H1 (cell line): ENCODE measurements at regions of chr6 and their contacts with region 1.

Region 1: DNA sequence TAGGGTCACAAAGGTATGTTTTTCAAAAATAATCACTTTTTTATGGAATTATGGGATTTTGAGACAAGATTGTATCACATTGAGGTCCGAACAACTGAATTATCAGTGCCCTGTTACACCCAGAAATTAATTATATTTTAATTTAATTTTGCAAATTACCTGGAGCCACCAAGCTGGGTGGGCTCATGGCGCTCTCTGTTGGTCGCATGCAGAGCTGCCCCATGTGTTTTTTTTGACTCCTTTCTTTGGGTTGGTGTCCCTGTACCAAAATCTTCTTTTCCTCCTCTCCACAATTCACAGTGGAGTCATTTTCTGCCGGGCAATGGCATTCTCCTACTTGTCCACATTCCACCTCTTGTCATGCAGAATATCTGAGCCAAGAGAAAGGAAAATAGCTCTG is 38.9 kb upstream of the FRMD1 start:
- DNase-seq: peak in 1 of 2 experiments; percentile 47
- H3K4me3 ChIP-seq: no peak overlapping the region
- H3K27ac ChIP-seq: no peak overlapping the region
- H3K4me1 ChIP-seq: peaks cover 0 to 3% (median 2%) of the 10 kb centered on the region in 4 experiments; a peak in 4 of 7 replicates
- H3K27me3 ChIP-seq: no peaks in the 10 kb centered on the region
- CTCF ChIP-seq: peak; percentile 59 to 75 (median 68)
- EP300 ChIP-seq: no peak
- POLR2A ChIP-seq: no peak
- RAD21 ChIP-seq: peak; percentile 84 to 89

Region 2: DNA sequence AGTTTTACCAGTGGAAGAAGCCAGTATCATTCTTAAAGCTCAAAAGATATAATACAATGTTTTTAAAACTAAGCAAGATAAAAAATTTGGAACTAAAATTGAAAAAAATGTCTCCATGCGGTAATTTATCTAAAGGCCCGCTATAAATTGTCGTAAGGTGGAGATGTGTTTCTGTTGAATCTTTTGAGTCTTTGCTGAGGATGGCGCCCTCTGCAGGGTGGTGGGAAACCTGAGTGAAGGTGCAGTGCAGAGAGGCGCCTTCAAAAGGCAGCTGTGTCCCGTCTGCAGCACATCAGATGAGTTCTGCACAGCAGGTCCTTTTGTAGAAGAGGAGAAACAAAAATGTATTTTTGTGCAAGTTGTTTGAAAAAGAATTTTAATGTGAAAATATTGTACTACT is 149.9 kb before region 1 on chr6:
- CTCF ChIA-PET with region 1: interaction called, 10 read pairs
- POLR2A ChIA-PET with region 1: no interaction called
- DNase-seq: peak; percentile 29 to 85
- H3K4me3 ChIP-seq: no peak overlapping the region
- H3K27ac ChIP-seq: no peak overlapping the region
- H3K4me1 ChIP-seq: peaks cover 0 to 4% (median under 1%) of the 10 kb centered on the region in 4 experiments; a peak in 4 of 7 replicates
- H3K27me3 ChIP-seq: no peaks in the 10 kb centered on the region
- CTCF ChIP-seq: peak; percentile 81 to 86 (median 86)
- EP300 ChIP-seq: no peak
- POLR2A ChIP-seq: no peak
- RAD21 ChIP-seq: peak; percentile 67 to 70

Region 3: GRCh38 chr6:168060521-168060931 is 57.4 kb before region 1 on chr6:
- CTCF ChIA-PET with region 1: interaction called, 71 read pairs
- POLR2A ChIA-PET with region 1: no interaction called
- DNase-seq: no peak
- H3K4me3 ChIP-seq: no peak overlapping the region
- H3K27ac ChIP-seq: no peak overlapping the region
- H3K4me1 ChIP-seq: no peaks in the 10 kb centered on the region
- H3K27me3 ChIP-seq: no peaks in the 10 kb centered on the region
- CTCF ChIP-seq: peak in 2 of 3 experiments; percentile 82 to 92; a peak in 3 of 4 replicates
- EP300 ChIP-seq: no peak
- POLR2A ChIP-seq: no peak
- RAD21 ChIP-seq: peak; percentile 90 to 93

Region 4: GRCh38 chr6:168071336-168072019 is 46.5 kb before region 1 on chr6:
- CTCF ChIA-PET with region 1: interaction called, 32 read pairs
- POLR2A ChIA-PET with region 1: no interaction called
- DNase-seq: peak in 1 of 2 experiments; percentile 74
- H3K4me3 ChIP-seq: no peak overlapping the region
- H3K27ac ChIP-seq: no peak overlapping the region
- H3K4me1 ChIP-seq: peaks cover 0 to 6% (median 1%) of the 10 kb centered on the region in 4 experiments; a peak in 2 of 7 replicates
- H3K27me3 ChIP-seq: no peaks in the 10 kb centered on the region
- CTCF ChIP-seq: peak; percentile 82 to 92 (median 89)
- EP300 ChIP-seq: no peak
- POLR2A ChIP-seq: no peak
- RAD21 ChIP-seq: peak; percentile 51 to 68

Region 5: GRCh38 chr6:168078175-168078942 is 39.6 kb before region 1 on chr6:
- CTCF ChIA-PET with region 1: interaction called, 31 read pairs
- POLR2A ChIA-PET with region 1: no interaction called
- DNase-seq: no peak
- H3K4me3 ChIP-seq: no peak overlapping the region
- H3K27ac ChIP-seq: no peak overlapping the region
- H3K4me1 ChIP-seq: peaks cover 0 to 7% (median 1%) of the 10 kb centered on the region in 4 experiments; a peak in 2 of 7 replicates
- H3K27me3 ChIP-seq: no peaks in the 10 kb centered on the region
- CTCF ChIP-seq: no peak
- EP300 ChIP-seq: no peak
- POLR2A ChIP-seq: no peak
- RAD21 ChIP-seq: no peak

Region 6: DNA sequence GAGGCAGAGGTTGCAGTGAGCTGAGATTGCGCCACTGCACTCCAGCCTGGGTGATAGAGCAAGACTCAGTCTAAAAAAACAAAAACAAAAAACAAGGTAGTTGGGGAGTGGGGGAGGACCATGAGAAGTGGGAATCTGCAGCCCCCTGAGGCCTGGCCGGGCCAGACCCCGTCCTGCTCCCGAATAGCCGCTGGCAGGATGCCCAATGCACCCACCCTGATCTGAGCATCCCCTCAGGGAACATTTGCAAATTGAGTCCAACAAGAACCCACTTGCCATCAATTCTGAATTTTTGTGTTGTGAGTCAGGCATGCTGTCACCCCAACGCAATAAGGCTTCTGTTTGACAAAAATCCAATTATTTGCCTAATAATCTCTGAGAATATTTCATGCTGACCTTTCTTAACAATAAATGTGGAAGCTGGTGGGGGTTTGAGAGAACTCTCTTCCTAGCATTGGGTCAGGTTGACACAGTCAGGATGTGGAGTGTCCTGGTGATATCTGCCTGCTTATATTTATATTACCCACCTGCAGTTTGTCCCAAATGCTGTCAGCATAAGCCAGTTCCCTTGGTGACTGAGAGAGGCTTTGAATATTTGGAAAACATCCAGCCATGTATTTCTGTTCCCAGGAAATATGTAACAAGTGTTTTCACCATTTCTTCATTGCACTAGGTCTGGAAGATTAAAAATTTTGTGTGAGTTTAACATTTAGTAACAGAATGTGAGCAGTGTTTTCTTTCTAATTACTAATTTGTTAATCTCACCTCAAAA is 10.5 kb before region 1 on chr6:
- CTCF ChIA-PET with region 1: interaction called, 15 read pairs
- POLR2A ChIA-PET with region 1: no interaction called
- DNase-seq: no peak
- H3K4me3 ChIP-seq: no peak overlapping the region
- H3K27ac ChIP-seq: no peak overlapping the region
- H3K4me1 ChIP-seq: peaks cover 0 to 7% (median 2%) of the 10 kb centered on the region in 4 experiments; a peak in 3 of 7 replicates
- H3K27me3 ChIP-seq: peaks cover 0 to 11% (median 5%) of the 10 kb centered on the region in 4 experiments; a peak in 3 of 7 replicates
- CTCF ChIP-seq: no peak
- EP300 ChIP-seq: no peak
- POLR2A ChIP-seq: no peak
- RAD21 ChIP-seq: no peak

Region 7: GRCh38 chr6:168132531-168133167 is 14.7 kb after region 1 on chr6:
- CTCF ChIA-PET with region 1: interaction called, 54 read pairs
- POLR2A ChIA-PET with region 1: no interaction called
- DNase-seq: peak; percentile 39 to 81
- H3K4me3 ChIP-seq: peak overlapping the region in 1 of 4 experiments; percentile 25; a peak in 2 of 8 replicates
- H3K27ac ChIP-seq: no peak overlapping the region
- H3K4me1 ChIP-seq: peaks cover 7 to 18% (median 12%) of the 10 kb centered on the region in 4 experiments
- H3K27me3 ChIP-seq: peaks cover 0 to 12% (median 10%) of the 10 kb centered on the region in 4 experiments; a peak in 5 of 7 replicates
- CTCF ChIP-seq: peak in 2 of 3 experiments; percentile 71 to 81; a peak in 3 of 4 replicates
- EP300 ChIP-seq: no peak
- POLR2A ChIP-seq: no peak
- RAD21 ChIP-seq: peak; percentile 80 to 87